ENCODE measurements at regions of chr3 and their contacts with region 1.

Region 1: DNA sequence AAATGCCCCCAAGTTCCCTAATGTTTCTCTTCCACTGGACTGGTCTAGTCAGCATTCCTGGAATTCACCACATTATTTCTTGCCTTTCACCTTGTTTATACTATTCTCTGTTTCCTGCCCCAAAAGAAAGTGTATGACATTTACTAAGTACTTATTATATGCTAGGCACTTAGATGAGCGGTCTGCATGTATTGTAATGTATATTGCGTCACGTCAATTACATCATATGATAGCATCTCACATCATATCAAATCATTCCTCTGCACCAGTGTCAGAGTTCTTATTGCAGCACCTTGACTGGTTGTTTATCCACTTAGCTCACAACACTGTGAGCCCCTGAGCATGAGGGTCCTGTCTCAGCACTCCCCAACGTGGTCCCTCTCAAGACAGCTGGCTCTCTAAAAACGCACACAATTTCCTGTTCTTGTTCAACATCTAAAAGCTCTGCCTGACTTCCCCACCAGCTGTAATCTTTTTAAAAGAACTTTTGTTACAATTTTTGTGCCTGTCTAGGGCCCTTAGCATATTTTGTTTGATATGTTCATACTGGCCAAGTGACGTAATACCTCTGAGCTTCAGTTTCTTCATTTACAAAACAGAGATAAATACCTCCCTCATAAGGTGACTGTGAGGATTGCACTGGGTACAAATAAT is 58.8 kb downstream of the ARHGAP31 start:
- DNase-seq: peak; percentile 73 to 87 (median 81)
- H3K4me3 ChIP-seq: no peak overlapping the region
- H3K4me3 Mint-ChIP-seq: peak overlapping the region in 1 of 2 donors; percentile 51
- H3K27ac ChIP-seq: peak overlapping the region; percentile 34 to 80
- H3K27ac Mint-ChIP-seq: peak overlapping the region; percentile 86 to 97 (median 92)
- H3K4me1 ChIP-seq: peaks cover 25 to 29% of the 10 kb centered on the region in 2 donors
- H3K4me1 Mint-ChIP-seq: peaks cover 44% of the 10 kb centered on the region
- H3K27me3 ChIP-seq: no peaks in the 10 kb centered on the region
- H3K27me3 Mint-ChIP-seq: peaks cover 0 to 5% (median 0%) of the 10 kb centered on the region in 3 donors
- CTCF ChIP-seq: peak; percentile 58

Region 2: GRCh38 chr3:119194237-119195150 is 158.5 kb before region 1 on chr3:
- intact Hi-C with region 1: no loop called
- DNase-seq: no peak
- H3K4me3 ChIP-seq: no peak overlapping the region
- H3K4me3 Mint-ChIP-seq: no peak overlapping the region
- H3K27ac ChIP-seq: no peak overlapping the region
- H3K27ac Mint-ChIP-seq: no peak overlapping the region
- H3K4me1 ChIP-seq: no peaks in the 10 kb centered on the region
- H3K4me1 Mint-ChIP-seq: no peaks in the 10 kb centered on the region
- H3K27me3 ChIP-seq: no peaks in the 10 kb centered on the region
- H3K27me3 Mint-ChIP-seq: peaks cover 0 to 3% (median 1%) of the 10 kb centered on the region in 3 donors
- CTCF ChIP-seq: no peak

Region 3: DNA sequence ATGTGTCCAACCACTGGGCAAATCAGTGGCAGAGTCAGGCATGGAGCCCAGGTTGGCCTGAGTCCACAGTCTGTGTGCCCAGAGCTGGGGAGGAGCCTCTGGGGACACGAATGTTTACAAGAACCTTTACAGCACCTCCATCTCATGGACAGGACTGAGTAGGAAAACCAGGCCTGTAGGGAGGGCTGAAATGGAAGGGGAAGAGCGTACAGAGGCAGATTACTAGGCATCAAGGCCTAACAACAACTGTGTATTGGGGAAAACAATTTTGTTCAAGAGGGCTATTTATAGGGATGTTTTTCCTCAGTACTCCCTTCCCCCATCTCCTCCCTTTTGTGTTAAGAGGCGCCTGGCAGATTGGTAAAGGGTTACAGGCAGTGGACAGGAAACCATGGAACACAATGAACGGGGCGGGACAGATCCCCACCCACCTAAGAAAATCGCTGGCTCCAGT is 73.8 kb before region 1 on chr3:
- intact Hi-C with region 1: loop called in 1 of 2 experiments (anchors 5 kb)
- DNase-seq: no peak
- H3K4me3 ChIP-seq: no peak overlapping the region
- H3K4me3 Mint-ChIP-seq: no peak overlapping the region
- H3K27ac ChIP-seq: no peak overlapping the region
- H3K27ac Mint-ChIP-seq: no peak overlapping the region
- H3K4me1 ChIP-seq: no peaks in the 10 kb centered on the region
- H3K4me1 Mint-ChIP-seq: peaks cover 2% of the 10 kb centered on the region
- H3K27me3 ChIP-seq: no peaks in the 10 kb centered on the region
- H3K27me3 Mint-ChIP-seq: peaks cover 0 to under 1% (median 0%) of the 10 kb centered on the region in 3 donors
- CTCF ChIP-seq: no peak

Region 4: DNA sequence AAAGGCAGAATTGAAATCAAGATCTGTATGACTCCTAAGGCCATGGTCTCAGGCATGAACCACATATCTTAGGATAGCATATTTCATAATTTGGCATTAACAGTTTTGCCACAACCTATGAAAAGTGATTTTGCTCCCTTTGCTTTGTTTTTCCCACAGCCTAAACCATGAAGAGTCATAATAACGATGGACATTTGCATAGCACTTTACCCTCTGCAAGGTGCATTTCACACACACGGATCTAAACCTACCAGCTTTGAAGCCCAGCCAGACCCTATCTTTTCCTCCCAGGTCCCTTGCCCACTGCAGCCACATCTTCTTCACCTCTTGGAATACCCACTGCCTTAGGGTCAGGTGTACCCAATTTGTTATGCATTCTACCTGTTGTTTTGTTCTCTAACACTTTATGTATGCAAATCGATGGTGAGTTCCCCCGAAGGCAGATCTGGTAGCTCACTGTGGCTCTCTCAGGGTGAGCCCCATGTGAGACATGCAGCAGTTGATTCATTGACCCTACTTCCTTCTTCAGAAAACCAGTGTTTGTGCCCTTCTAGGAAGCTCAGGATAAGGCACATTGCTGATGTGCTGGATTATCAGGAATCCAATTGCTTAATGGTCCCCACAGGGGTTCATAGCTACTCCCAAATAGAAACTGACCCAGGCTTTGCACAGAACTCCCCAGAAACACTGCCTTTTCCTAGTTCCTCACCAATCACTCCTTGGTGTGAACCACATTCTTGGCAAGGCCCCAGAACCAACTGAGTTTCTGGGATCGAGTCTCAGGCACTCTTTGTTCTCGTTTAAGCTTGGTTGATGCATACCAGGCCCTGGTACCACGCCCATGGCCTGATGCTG is 50.1 kb before region 1 on chr3:
- intact Hi-C with region 1: loop called (anchors 5 to 10 kb)
- DNase-seq: peak; percentile 36 to 44 (median 37)
- H3K4me3 ChIP-seq: no peak overlapping the region
- H3K4me3 Mint-ChIP-seq: no peak overlapping the region
- H3K27ac ChIP-seq: peak overlapping the region in 1 of 2 donors; percentile 92
- H3K27ac Mint-ChIP-seq: peak overlapping the region; percentile 57 to 95 (median 75)
- H3K4me1 ChIP-seq: peaks cover 33 to 52% of the 10 kb centered on the region in 2 donors
- H3K4me1 Mint-ChIP-seq: peaks cover 58% of the 10 kb centered on the region
- H3K27me3 ChIP-seq: no peaks in the 10 kb centered on the region
- H3K27me3 Mint-ChIP-seq: peaks cover 0 to 2% (median 0%) of the 10 kb centered on the region in 3 donors
- CTCF ChIP-seq: no peak

Region 5: GRCh38 chr3:119322835-119323722 is 29.9 kb before region 1 on chr3:
- intact Hi-C with region 1: loop called in 1 of 2 experiments (anchors 2 kb)
- DNase-seq: peak; percentile 97 to 98 (median 98)
- H3K4me3 ChIP-seq: peak overlapping the region; percentile 74 to 90 (median 85)
- H3K4me3 Mint-ChIP-seq: peak overlapping the region; percentile 88 to 93
- H3K27ac ChIP-seq: peak overlapping the region; percentile 98 to 100
- H3K27ac Mint-ChIP-seq: peak overlapping the region; percentile 98 to 99 (median 98)
- H3K4me1 ChIP-seq: peaks cover 28 to 37% of the 10 kb centered on the region in 2 donors
- H3K4me1 Mint-ChIP-seq: peaks cover 42% of the 10 kb centered on the region
- H3K27me3 ChIP-seq: no peaks in the 10 kb centered on the region
- H3K27me3 Mint-ChIP-seq: peaks cover 0 to 2% (median 0%) of the 10 kb centered on the region in 3 donors
- CTCF ChIP-seq: no peak